Sigmoid colon (tissue), 7 donors: ENCODE measurements at regions of chr4 and their contacts with region 1.

Region 1: GRCh38 chr4:2262143-2262943 is 434 bp upstream of the MXD4 start:
- DNase-seq: peak; percentile 100
- H3K4me3 ChIP-seq: peak overlapping the region; percentile 48 to 94 (median 92)
- H3K27ac ChIP-seq: peak overlapping the region; percentile 96 to 99 (median 98)
- H3K4me1 ChIP-seq: peaks cover 0 to 85% (median 70%) of the 10 kb centered on the region in 4 donors
- H3K27me3 ChIP-seq: no peaks in the 10 kb centered on the region
- CTCF ChIP-seq: no peak
- EP300 ChIP-seq: no peak
- POLR2A ChIP-seq: peak; percentile 53 to 72

Region 2: DNA sequence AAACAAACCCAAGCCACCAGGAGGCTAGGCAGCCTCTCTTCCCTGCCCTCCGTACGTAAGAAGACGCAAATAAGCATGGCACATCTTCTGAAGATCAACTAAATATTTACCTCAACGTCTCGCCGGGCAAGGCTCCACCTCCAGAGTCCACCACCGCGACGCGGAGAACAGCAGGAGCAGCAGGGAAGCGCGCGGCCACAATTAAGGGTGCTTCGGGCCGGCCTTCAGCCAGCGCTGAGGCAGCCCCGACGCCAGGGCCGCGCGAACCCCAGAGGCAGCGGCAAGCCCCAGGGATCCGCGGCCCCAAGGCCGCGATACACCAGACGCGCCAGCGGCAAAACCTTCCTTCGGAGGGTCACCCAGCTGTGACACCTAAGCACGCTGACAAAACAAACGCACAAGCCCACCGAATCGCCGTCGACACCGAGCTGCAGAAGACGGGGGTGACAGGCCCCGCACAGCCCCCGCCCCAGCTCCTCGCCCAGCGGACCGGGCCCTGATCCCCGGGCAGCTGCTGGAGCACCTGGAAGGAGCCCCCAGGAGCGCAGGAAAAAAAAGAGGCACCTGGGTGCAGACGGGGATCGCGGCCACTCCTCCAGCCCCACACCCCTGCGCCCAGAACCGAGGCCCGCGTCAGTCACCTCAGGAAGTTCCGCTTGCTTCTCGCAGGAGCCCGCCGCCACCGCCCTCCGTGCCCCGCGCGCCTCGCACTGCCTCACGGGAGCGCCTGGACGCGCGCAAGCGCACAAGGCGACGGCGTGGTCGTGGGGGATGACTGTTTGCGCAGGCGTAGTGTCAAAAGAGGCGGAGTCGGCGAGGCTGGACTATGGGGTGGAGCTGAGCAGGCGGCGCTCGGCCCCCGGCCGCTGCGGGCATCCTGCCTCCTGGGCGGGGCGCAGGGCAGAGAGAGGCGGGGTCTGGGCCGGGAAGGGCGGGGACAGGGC is 20.7 kb before region 1 on chr4 and contains the starts of genes HAUS3 and POLN:
- intact Hi-C with region 1: loop called (anchors 1 kb)
- DNase-seq: peak; percentile 99
- H3K4me3 ChIP-seq: peak within 1 kb of the TSS; percentile 72 to 86 (median 85)
- H3K27ac ChIP-seq: peak within 1 kb of the TSS; percentile 80 to 84 (median 82)
- H3K4me1 ChIP-seq: peaks cover 0 to 51% (median 41%) of the 10 kb centered on the region in 4 donors
- H3K27me3 ChIP-seq: no peaks in the 10 kb centered on the region
- CTCF ChIP-seq: no peak
- EP300 ChIP-seq: no peak
- POLR2A ChIP-seq: peak; percentile 76 to 84
- total RNA-seq, gene HAUS3: 12.1 to 18.5 (median 16.4) TPM
- total RNA-seq, gene POLN: 1.8 to 9.4 (median 2.6) TPM

Region 3: GRCh38 chr4:2364654-2365053 is 102.3 kb after region 1 on chr4:
- intact Hi-C with region 1: loop called (anchors 10 kb)
- DNase-seq: peak; percentile 73
- H3K4me3 ChIP-seq: peak overlapping the region; percentile 53 to 61 (median 58)
- H3K27ac ChIP-seq: peak overlapping the region in 3 of 4 donors; percentile 24 to 46 (median 46)
- H3K4me1 ChIP-seq: peaks cover 0 to 18% (median 15%) of the 10 kb centered on the region in 4 donors
- H3K27me3 ChIP-seq: no peaks in the 10 kb centered on the region
- CTCF ChIP-seq: no peak
- EP300 ChIP-seq: no peak
- POLR2A ChIP-seq: no peak

Region 4: GRCh38 chr4:2418650-2419571 is 156.6 kb after region 1 on chr4 and contains the start of gene CFAP99:
- intact Hi-C with region 1: loop called (anchors 5 kb)
- DNase-seq: peak; percentile 98
- H3K4me3 ChIP-seq: peak within 1 kb of the TSS; percentile 34 to 73 (median 69)
- H3K27ac ChIP-seq: peak within 1 kb of the TSS in 2 of 4 donors; percentile 20 to 43
- H3K4me1 ChIP-seq: peaks cover 0 to 33% (median 29%) of the 10 kb centered on the region in 4 donors
- H3K27me3 ChIP-seq: peaks cover 8 to 84% (median 57%) of the 10 kb centered on the region in 3 donors
- CTCF ChIP-seq: no peak
- EP300 ChIP-seq: no peak
- POLR2A ChIP-seq: no peak
- total RNA-seq, gene CFAP99: not detected

Region 5: DNA sequence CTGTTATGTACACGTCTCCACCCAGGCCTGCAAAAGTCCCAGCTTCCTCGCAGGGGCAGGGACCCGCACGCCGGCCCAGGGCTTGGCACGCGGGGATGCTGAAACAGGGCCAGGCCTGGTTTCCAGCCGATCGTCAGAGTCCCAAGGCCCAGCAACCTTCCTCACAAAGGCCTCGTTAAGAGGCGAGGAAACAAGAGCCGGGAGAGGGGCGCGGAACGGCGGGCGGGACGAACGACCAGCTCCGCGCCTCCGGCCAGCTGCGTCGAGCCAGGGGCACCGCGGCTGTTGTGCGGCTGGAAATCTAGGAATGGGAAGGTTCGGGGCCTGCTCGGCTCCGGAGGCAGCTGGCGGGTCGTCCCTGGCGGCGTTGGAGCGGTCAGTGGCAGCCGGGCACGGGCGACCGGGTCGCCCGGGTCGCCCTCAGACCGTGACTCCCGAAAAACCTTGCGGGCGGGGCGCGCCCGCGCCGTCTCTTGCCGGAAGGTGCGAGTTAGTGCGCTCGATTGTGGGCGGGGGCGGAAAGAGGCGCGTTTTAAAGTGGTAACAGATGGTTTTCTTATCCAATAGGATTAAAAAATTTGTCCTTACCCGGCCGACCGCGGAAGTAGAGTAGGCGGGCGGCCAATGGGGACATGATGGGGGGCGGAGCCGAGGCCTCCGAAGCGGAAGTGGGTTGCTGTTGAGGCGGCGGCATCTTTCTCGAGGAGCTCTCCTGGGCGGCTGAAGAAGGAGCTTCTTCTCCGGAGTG is 206.3 kb after region 1 on chr4 and contains the start of gene RNF4:
- intact Hi-C with region 1: loop called (anchors 2 kb)
- DNase-seq: peak; percentile 98
- H3K4me3 ChIP-seq: peak within 1 kb of the TSS; percentile 84 to 93 (median 86)
- H3K27ac ChIP-seq: peak within 1 kb of the TSS; percentile 89 to 98 (median 94)
- H3K4me1 ChIP-seq: peaks cover 0 to 34% (median 27%) of the 10 kb centered on the region in 4 donors
- H3K27me3 ChIP-seq: no peaks in the 10 kb centered on the region
- CTCF ChIP-seq: no peak
- EP300 ChIP-seq: no peak
- POLR2A ChIP-seq: peak in 1 of 2 donors; percentile 56
- total RNA-seq, gene RNF4: 28.5 to 51.0 (median 40.4) TPM

Region 6: DNA sequence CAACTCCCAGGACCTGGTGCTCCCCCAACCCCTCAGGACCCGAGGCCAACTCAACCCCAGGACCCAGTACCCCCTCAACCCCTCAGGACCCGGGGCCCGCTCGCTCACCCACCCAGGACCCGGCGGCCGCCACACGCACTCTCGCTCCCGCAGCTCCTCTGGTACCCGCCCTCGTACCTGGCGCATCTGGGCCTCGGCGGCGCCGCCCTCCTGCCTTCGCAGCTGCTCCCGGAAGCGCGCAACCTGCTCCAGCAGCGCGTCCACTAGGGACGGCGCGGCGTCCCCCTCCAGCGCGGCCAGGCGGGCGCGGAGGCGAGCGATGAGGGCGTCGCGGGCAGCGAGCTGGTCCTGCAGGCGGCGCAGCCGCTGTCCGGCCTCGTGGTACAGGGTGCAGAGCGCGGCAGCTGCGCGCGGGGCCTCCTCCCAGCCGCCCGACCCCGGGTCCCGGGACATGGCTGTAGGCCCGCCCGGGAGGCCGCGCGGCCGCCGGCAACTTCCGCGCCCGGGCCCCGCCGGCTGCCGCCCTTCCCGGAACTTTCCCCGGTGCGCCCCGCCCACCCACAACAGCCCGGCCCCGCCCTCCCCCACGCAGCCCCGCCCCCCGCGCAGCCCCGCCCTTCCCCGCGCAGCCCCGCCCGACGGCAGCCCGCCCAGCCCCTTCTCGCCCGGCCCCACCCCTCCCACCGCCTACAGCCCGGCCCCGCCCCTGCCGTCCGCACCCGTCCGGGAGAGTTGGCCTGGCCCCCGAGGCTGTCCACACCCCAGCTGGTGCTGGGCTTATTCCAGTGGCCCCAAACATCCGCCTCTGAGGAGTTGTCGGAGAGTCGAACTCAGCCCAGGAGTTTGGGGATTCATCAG is 493.7 kb after region 1 on chr4 and contains the start of gene TNIP2:
- intact Hi-C with region 1: loop called (anchors 5 kb)
- DNase-seq: peak; percentile 95
- H3K4me3 ChIP-seq: peak within 1 kb of the TSS; percentile 51 to 86 (median 80)
- H3K27ac ChIP-seq: peak within 1 kb of the TSS; percentile 76 to 84 (median 82)
- H3K4me1 ChIP-seq: peaks cover 0 to 32% (median 23%) of the 10 kb centered on the region in 4 donors
- H3K27me3 ChIP-seq: no peaks in the 10 kb centered on the region
- CTCF ChIP-seq: peak in 3 of 4 experiments; percentile 12 to 37 (median 16)
- EP300 ChIP-seq: no peak
- POLR2A ChIP-seq: no peak
- total RNA-seq, gene TNIP2: 56.3 to 68.8 (median 66.9) TPM